Gastrocnemius medialis (tissue), 4 donors: ENCODE measurements at regions of chr4 and their contacts with region 1.

Region 1: GRCh38 chr4:138035781-138036258 is 206.3 kb downstream of the SLC7A11 start:
- DNase-seq: no peak
- ATAC-seq: peak; percentile 63 to 75
- H3K4me3 ChIP-seq: no peak overlapping the region
- H3K27ac ChIP-seq: no peak overlapping the region
- H3K4me1 ChIP-seq: peaks cover 7 to 10% of the 10 kb centered on the region in 2 donors
- H3K27me3 ChIP-seq: no peaks in the 10 kb centered on the region
- CTCF ChIP-seq: peak; percentile 18 to 61 (median 52)
- POLR2A ChIP-seq: no peak

Region 2: GRCh38 chr4:138090150-138090917 is 54.5 kb after region 1 on chr4:
- in situ Hi-C with region 1: no loop called
- intact Hi-C with region 1: loop called (anchors 1 kb)
- DNase-seq: peak; percentile 6 to 31
- ATAC-seq: peak; percentile 80
- H3K4me3 ChIP-seq: peak overlapping the region; percentile 30 to 56 (median 34)
- H3K27ac ChIP-seq: peak overlapping the region in 1 of 4 donors; percentile 25
- H3K4me1 ChIP-seq: peaks cover 17 to 18% of the 10 kb centered on the region in 2 donors
- H3K27me3 ChIP-seq: no peaks in the 10 kb centered on the region
- CTCF ChIP-seq: peak; percentile 60 to 83 (median 73)
- POLR2A ChIP-seq: no peak

Region 3: GRCh38 chr4:138182838-138183426 is 147.1 kb after region 1 on chr4:
- in situ Hi-C with region 1: loop called in 1 of 4 experiments (anchors 25 kb)
- intact Hi-C with region 1: loop called (anchors 2 kb)
- DNase-seq: no peak
- ATAC-seq: peak; percentile 64 to 75
- H3K4me3 ChIP-seq: no peak overlapping the region
- H3K27ac ChIP-seq: no peak overlapping the region
- H3K4me1 ChIP-seq: peaks cover 11 to 21% of the 10 kb centered on the region in 2 donors
- H3K27me3 ChIP-seq: no peaks in the 10 kb centered on the region
- CTCF ChIP-seq: peak; percentile 45 to 66 (median 61)
- POLR2A ChIP-seq: no peak

Region 4: GRCh38 chr4:138680989-138681604 is 645.3 kb after region 1 on chr4:
- in situ Hi-C with region 1: loop called in 3 of 4 experiments (anchors 5 to 25 kb)
- intact Hi-C with region 1: loop called (anchors 2 kb)
- DNase-seq: peak; percentile 50 to 53
- ATAC-seq: peak; percentile 67 to 70
- H3K4me3 ChIP-seq: no peak overlapping the region
- H3K27ac ChIP-seq: no peak overlapping the region
- H3K4me1 ChIP-seq: peaks cover 3 to 20% of the 10 kb centered on the region in 2 donors
- H3K27me3 ChIP-seq: no peaks in the 10 kb centered on the region
- CTCF ChIP-seq: peak; percentile 76 to 93 (median 84)
- POLR2A ChIP-seq: no peak

Region 5: GRCh38 chr4:138948918-138949317 is 913.1 kb after region 1 on chr4:
- in situ Hi-C with region 1: no loop called
- intact Hi-C with region 1: loop called (anchors 10 kb)
- DNase-seq: no peak
- ATAC-seq: no peak
- H3K4me3 ChIP-seq: no peak overlapping the region
- H3K27ac ChIP-seq: no peak overlapping the region
- H3K4me1 ChIP-seq: peaks cover 0 to 5% of the 10 kb centered on the region in 2 donors
- H3K27me3 ChIP-seq: no peaks in the 10 kb centered on the region
- CTCF ChIP-seq: no peak
- POLR2A ChIP-seq: no peak